Aorta (tissue), 5 donors: ENCODE measurements at regions of chr15 and their contacts with region 1.

Region 1: GRCh38 chr15:95715906-95716656 is 614.4 kb upstream of the NR2F2 start:
- DNase-seq: no peak
- ATAC-seq: no peak
- H3K4me3 ChIP-seq: no peak overlapping the region
- H3K27ac ChIP-seq: no peak overlapping the region
- H3K4me1 ChIP-seq: peaks cover 8% of the 10 kb centered on the region in 2 donors
- H3K27me3 ChIP-seq: no peaks in the 10 kb centered on the region

Region 2: DNA sequence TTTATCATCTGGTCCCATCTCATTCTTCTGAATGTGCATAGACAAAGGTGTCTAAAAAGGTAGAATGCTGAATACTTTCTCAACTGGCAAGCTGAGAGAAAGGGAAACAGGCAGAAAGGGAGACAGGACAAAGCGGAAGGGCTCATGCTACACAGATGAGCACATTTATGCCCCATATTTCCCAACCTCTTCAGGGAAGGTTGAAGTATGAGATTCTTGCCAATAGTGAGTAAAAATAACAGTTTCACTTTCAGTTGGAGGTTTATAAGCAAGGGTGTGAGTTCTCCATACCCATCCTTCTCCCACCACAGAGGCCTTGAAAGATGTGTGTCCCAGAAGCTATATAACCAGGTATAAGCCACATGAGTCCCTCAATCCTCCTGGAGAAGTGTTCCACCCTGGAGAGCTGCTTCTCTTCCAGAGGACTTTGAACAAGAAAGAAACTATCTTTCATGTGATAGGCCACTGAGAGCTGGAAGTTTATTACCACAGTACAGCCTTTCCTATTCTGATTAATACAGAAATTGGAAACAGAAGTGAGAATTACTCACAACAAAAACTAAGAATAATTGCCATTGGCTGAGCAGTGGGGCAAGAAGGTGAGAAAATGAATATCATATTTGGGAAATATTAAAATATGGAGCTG is 95.0 kb before region 1 on chr15:
- intact Hi-C with region 1: loop called in 1 of 2 experiments (anchors 10 kb)
- DNase-seq: no peak
- ATAC-seq: no peak
- H3K4me3 ChIP-seq: no peak overlapping the region
- H3K27ac ChIP-seq: no peak overlapping the region
- H3K4me1 ChIP-seq: peaks cover 0 to 2% of the 10 kb centered on the region in 2 donors
- H3K27me3 ChIP-seq: no peaks in the 10 kb centered on the region